AG04450 (cell line): ENCODE measurements at regions of chr19 and their contacts with region 1.

Region 1: GRCh38 chr19:7355151-7355820 is 6.5 kb downstream of the ARHGEF18 start:
- DNase-seq: no peak
- H3K4me3 ChIP-seq: no peak overlapping the region
- H3K27ac ChIP-seq: no peak overlapping the region
- H3K27me3 ChIP-seq: peaks cover 11% of the 10 kb centered on the region
- CTCF ChIP-seq: no peak

Region 2: DNA sequence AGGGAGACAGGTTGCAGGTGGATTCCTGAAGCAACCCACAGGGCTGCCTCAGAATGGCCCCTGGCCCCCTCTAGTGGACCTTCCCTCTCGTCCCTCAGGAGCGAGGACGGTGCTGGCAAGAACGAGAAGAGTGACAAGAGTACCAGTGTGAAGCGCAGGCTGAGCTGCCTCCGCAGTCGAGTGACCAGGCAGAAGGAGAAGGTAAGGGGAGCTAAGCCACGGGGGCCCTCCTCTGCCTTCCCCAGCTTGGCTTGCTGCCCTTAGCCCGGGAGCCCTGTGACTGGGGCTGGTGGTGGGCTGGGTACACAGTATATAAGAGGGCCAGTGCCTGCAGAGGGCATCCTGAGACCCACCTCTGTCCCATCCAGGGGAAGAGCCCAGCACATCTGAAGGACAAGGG is 27.4 kb after region 1 on chr19:
- CTCF ChIA-PET with region 1: interaction called, 34 read pairs
- POLR2A ChIA-PET with region 1: no interaction called
- DNase-seq: no peak
- H3K4me3 ChIP-seq: no peak overlapping the region
- H3K27ac ChIP-seq: no peak overlapping the region
- H3K27me3 ChIP-seq: peaks cover 6% of the 10 kb centered on the region
- CTCF ChIP-seq: no peak

Region 3: DNA sequence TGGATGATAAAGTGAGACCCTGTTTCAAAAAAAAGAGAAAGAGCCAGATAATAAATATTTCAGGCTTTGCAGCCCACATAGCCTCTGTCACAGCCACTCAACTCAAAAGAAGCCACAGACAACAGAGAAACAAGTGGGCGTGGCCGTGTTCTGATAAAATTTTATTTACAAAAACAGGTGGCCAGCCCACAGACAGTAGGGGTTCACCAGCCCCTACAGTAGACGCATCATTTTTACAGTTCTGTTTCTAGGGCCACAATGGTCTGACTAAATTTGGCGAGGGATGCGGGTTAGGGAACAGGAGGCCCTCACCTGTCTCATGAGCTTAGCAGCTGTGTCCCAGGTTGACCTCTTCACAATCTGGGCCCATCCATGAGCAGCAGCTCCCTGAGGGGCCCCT is 53.0 kb after region 1 on chr19:
- CTCF ChIA-PET with region 1: no interaction called
- POLR2A ChIA-PET with region 1: no interaction called
- DNase-seq: no peak
- H3K4me3 ChIP-seq: no peak overlapping the region
- H3K27ac ChIP-seq: no peak overlapping the region
- H3K27me3 ChIP-seq: no peaks in the 10 kb centered on the region
- CTCF ChIP-seq: no peak

Region 4: DNA sequence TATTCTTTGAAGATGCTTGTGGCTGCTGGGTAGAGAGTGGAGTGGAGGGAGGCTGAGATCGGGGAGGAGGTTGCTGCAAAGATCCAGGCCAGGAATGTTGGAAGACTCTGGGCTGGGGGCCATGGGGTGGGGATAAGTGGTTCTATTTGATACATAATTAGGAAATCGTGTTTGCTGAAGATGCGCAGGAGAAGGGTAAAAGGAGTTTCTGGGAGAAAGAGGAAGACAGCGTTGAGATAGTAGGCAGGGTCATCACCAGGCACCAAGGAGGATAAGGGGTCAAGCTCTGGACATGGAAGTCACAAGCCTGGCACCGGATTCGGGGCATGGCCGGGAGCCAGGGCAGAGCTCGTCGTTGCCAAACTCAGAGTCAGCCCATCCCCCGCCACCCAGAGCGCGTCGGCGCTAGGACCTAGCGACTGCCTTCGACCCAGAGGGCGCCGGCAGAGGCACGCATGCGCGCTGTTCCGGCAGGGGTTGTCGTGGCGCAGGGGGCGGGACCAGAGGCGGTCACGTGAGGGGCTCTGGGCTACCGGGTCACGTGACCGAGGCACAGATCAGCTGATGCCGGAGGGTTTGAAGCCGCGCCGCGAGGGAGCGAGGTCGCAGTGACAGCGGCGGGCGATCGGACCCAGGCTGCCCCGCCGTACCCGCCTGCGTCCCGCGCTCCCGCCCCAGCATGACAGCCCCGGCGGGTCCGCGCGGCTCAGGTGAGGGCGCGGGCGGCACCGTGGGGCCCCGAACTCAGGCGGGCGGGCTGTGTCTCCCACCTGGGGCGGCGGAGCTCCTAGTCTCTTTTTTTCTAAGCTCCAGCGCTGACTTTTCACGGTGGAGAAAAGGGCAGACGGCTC is 167.0 kb after region 1 on chr19 and contains the start of gene MCOLN1:
- CTCF ChIA-PET with region 1: interaction called, 12 read pairs
- POLR2A ChIA-PET with region 1: no interaction called
- DNase-seq: peak; percentile 88
- H3K4me3 ChIP-seq: peak within 1 kb of the TSS; percentile 74
- H3K27ac ChIP-seq: no peak within 1 kb of the TSS
- H3K27me3 ChIP-seq: no peaks in the 10 kb centered on the region
- CTCF ChIP-seq: no peak
- polyA plus RNA-seq, gene MCOLN1: 12.8 and 16.0 TPM in 2 replicates

Region 5: DNA sequence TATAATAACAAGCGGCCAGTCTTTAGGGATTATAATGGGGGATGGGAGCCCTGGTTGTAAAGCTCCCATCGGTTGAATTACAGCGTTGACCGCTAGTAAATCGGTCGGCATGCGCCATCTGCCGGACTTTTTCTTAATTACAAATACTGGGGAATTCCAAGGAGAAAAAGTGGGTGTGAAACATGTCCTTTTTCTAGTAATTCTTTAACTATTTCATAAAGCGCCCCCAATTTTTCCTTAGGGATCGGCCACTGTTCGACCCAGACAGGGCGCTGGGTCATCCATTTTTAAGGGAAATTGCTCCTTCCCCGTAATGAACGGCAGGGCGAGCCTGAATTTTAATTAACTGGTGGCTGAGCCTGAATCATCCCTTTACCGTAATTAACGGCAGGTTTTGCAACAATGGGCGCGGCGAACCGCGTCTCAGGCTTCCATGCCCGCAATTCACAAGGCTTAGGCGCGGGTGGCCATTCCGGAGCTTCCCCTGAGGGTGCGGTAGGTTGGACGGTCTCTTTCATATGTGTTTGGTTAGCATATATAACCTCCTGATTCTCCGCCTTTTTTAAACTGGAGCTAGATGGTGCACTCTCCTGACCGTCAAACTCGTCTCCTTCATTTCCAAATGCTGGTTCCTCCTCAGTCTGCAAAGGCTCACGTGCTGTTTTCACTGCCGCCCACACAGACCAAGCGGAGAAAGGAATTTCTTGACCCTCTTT is 444.5 kb after region 1 on chr19:
- CTCF ChIA-PET with region 1: interaction called, 43 read pairs
- POLR2A ChIA-PET with region 1: no interaction called
- DNase-seq: peak; percentile 55
- H3K4me3 ChIP-seq: peak overlapping the region; percentile 51
- H3K27ac ChIP-seq: no peak overlapping the region
- H3K27me3 ChIP-seq: peaks cover 2% of the 10 kb centered on the region
- CTCF ChIP-seq: peak; percentile 62